H1 (cell line): ENCODE measurements at regions of chr20 and their contacts with region 1.

Region 1: DNA sequence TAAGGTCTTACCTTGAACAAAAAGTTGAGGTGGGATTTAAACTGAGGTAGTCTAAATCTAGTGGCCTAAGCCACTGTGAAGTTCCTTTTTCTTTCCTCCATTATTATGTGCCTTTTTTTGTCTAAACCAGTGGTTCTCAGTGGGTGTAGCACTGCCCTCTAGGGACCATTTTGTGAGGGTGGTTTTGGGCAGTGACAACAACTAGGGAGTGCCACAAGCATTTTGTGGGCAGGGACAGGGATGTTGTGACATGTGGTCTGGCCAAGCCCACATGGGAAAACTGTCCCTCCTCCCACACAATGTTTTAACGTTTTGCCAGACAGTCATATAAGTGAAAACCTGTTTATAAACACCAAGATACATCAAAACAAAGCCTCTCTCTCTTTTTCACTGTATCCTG is 899.4 kb upstream of the FLRT3 start:
- DNase-seq: peak; percentile 33 to 61
- H3K4me3 ChIP-seq: no peak overlapping the region
- H3K27ac ChIP-seq: no peak overlapping the region
- H3K4me1 ChIP-seq: no peaks in the 10 kb centered on the region
- H3K27me3 ChIP-seq: no peaks in the 10 kb centered on the region
- CTCF ChIP-seq: peak; percentile 57 to 80 (median 72)
- EP300 ChIP-seq: no peak
- POLR2A ChIP-seq: no peak
- RAD21 ChIP-seq: peak; percentile 88 to 90

Region 2: GRCh38 chr20:15248618-15249395 is 12.0 kb after region 1 on chr20:
- CTCF ChIA-PET with region 1: interaction called, 25 read pairs
- POLR2A ChIA-PET with region 1: no interaction called
- DNase-seq: no peak
- H3K4me3 ChIP-seq: no peak overlapping the region
- H3K27ac ChIP-seq: no peak overlapping the region
- H3K4me1 ChIP-seq: 0 out of 7 replicates have a peak, but pooled peaks cover 0 to 3% (median 0%) of the 10 kb centered on the region in 4 experiments
- H3K27me3 ChIP-seq: no peaks in the 10 kb centered on the region
- CTCF ChIP-seq: no peak
- EP300 ChIP-seq: no peak
- POLR2A ChIP-seq: no peak
- RAD21 ChIP-seq: no peak